AG04449 (cell line): ENCODE measurements at regions of chr1 and their contacts with region 1.

Region 1: GRCh38 chr1:203871107-203871875 is 9.9 kb downstream of the SNRPE start:
- DNase-seq: no peak
- H3K4me3 ChIP-seq: no peak overlapping the region
- CTCF ChIP-seq: peak; percentile 91

Region 2: DNA sequence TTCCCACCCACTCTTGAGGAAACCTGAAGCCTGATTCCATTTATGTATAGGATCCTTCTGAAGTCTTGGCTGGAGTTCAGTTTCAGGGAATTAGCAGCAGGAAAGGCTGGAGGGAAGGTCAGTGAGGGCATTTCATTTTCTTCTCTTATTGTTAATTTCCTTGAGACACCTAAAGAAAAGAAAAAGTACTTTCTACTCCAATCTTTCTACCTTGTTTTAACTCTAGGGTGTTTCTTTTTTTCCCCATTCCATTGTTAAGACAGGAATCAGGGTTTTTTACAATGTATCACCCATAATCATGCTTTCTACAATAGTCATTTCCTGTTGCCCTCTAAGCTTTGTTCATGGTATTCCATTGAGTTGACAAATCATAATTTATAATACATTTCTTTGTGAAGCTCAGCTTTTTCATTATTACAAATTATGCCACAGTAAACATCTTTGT is 17.5 kb after region 1 on chr1:
- CTCF ChIA-PET with region 1: interaction called, 27 read pairs
- POLR2A ChIA-PET with region 1: no interaction called
- DNase-seq: no peak
- H3K4me3 ChIP-seq: no peak overlapping the region
- CTCF ChIP-seq: no peak

Region 3: GRCh38 chr1:203926025-203926540 is 54.8 kb after region 1 on chr1:
- CTCF ChIA-PET with region 1: interaction called, 11 read pairs
- POLR2A ChIA-PET with region 1: no interaction called
- DNase-seq: no peak
- H3K4me3 ChIP-seq: no peak overlapping the region
- CTCF ChIP-seq: no peak

Region 4: GRCh38 chr1:204045430-204045829 is 174.1 kb after region 1 on chr1:
- CTCF ChIA-PET with region 1: no interaction called
- POLR2A ChIA-PET with region 1: no interaction called
- DNase-seq: no peak
- H3K4me3 ChIP-seq: no peak overlapping the region
- CTCF ChIP-seq: no peak

Region 5: GRCh38 chr1:204080163-204080903 is 209.0 kb after region 1 on chr1:
- CTCF ChIA-PET with region 1: interaction called, 14 read pairs
- POLR2A ChIA-PET with region 1: no interaction called
- DNase-seq: no peak
- H3K4me3 ChIP-seq: peak overlapping the region; percentile 12; the same call in 1 of the 2 replicates
- CTCF ChIP-seq: no peak

Region 6: DNA sequence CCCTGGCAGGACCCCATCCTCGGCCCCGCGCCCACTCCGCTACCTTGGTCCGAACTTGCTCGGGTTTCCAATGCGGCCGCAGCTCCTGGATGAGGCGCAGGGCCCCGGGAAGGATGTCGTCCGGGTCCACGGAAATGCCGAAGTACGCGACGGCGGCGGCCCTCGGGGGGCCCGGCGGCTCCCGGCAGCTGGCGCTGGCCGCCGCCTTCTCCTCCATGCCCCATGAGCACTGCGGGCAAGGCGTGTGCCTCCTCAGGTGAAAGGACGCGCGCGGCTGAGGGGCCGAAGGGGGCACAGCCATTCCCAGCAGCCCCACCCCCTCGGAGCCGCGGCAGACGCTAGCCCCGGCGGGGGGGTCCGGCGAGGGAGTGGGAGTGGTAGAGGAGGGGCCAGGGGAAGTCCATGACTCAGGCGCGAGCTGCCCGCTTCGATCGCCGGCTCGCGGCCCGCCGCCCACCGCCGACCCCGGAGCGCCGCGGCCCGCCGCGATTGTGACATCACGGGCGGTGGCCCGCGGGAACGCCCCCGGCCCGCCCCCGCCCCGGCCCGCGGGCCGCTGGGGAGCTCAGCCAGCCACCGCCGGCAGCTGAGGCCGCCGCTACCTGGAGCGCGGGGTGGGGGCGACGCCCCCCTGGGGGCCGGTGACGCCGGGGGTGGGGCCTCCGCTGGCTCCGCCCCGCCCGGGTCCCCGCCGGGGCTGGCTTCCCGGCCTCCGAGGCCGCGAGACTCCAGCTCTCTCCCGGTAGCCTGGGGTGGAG is 280.4 kb after region 1 on chr1 and contains the start of gene ETNK2:
- CTCF ChIA-PET with region 1: interaction called, 33 read pairs
- POLR2A ChIA-PET with region 1: no interaction called
- DNase-seq: no peak
- H3K4me3 ChIP-seq: peak within 1 kb of the TSS; percentile 66
- CTCF ChIP-seq: no peak